ENCODE measurements at regions of chr17 and their contacts with region 1.

Region 1: DNA sequence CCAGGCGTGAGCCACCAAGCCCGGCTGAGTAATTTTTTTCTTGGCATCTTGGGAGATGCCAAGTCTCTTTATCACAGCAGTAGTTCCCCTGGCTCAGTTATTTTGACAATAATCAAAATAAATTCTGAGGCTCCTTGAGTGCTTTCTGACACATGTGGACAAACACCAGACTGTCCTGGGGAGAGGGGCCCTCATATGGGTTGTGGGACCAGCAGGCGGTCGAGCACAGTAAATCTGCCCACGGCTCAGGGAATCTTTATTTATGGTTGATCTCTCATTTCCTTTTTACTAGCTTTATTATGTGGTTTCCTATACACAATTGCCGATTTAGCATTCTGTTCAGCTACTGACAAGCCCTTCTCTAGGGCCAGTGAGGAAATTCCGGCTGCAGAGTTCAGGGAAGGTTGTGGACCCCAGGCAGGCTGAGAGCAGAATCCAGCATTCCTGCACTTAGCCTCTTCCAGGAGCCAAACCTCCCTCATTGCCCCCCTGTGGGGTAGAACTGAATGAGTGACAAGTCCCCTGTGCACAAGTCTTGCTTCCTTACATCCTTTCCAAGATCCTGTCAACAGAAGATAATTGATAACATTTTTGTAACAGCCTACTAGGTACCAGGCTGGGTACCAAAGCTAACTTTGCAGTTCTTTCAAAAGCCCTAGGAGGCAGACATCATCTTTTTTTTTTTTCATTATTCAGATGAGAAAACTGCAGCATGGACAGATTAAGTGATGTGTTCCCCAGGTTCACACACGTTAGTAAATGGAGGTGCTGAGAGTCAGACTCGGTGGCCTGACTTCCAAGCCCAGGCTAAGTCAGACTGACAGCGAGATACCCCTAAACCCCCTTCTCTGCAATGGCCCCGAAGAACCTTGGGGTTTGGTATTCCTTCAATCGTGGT is 40.2 kb downstream of the HS3ST3B1 start:
- DNase-seq: no peak
- ATAC-seq: no peak
- H3K4me3 ChIP-seq: no peak overlapping the region
- H3K4me3 Mint-ChIP-seq: peak overlapping the region in 9 of 10 donors; percentile 37 to 74 (median 61)
- H3K27ac ChIP-seq: no peak overlapping the region
- H3K27ac Mint-ChIP-seq: peak overlapping the region; percentile 23 to 93 (median 88)
- H3K4me1 ChIP-seq: peaks cover 3 to 35% of the 10 kb centered on the region in 2 donors
- H3K4me1 Mint-ChIP-seq: peaks cover 40 to 71% (median 57%) of the 10 kb centered on the region in 7 donors
- H3K27me3 ChIP-seq: no peaks in the 10 kb centered on the region
- H3K27me3 Mint-ChIP-seq: no peaks in the 10 kb centered on the region

Region 2: GRCh38 chr17:14033166-14033565 is 307.9 kb before region 1 on chr17:
- CTCF ChIA-PET with region 1: no interaction called
- POLR2A ChIA-PET with region 1: no interaction called
- intact Hi-C with region 1: no loop called
- DNase-seq: no peak
- ATAC-seq: no peak
- H3K4me3 ChIP-seq: no peak overlapping the region
- H3K4me3 Mint-ChIP-seq: no peak overlapping the region
- H3K27ac ChIP-seq: no peak overlapping the region
- H3K27ac Mint-ChIP-seq: peak overlapping the region in 1 of 9 donors; percentile 19
- H3K4me1 ChIP-seq: no peaks in the 10 kb centered on the region
- H3K4me1 Mint-ChIP-seq: peaks cover 7 to 30% (median 16%) of the 10 kb centered on the region in 7 donors
- H3K27me3 ChIP-seq: no peaks in the 10 kb centered on the region
- H3K27me3 Mint-ChIP-seq: no peaks in the 10 kb centered on the region

Region 3: GRCh38 chr17:14489986-14490385 is 148.9 kb after region 1 on chr17:
- CTCF ChIA-PET with region 1: no interaction called
- POLR2A ChIA-PET with region 1: no interaction called
- intact Hi-C with region 1: loop called in 1 of 2 experiments (anchors 5 kb)
- DNase-seq: no peak
- ATAC-seq: no peak
- H3K4me3 ChIP-seq: no peak overlapping the region
- H3K4me3 Mint-ChIP-seq: no peak overlapping the region
- H3K27ac ChIP-seq: no peak overlapping the region
- H3K27ac Mint-ChIP-seq: no peak overlapping the region
- H3K4me1 ChIP-seq: no peaks in the 10 kb centered on the region
- H3K4me1 Mint-ChIP-seq: peaks cover 0 to 2% (median 0%) of the 10 kb centered on the region in 7 donors
- H3K27me3 ChIP-seq: no peaks in the 10 kb centered on the region
- H3K27me3 Mint-ChIP-seq: peaks cover 0 to 11% (median 0%) of the 10 kb centered on the region in 5 donors